ENCODE measurements at regions of chr2 and their contacts with region 1.

Region 1: GRCh38 chr2:84925724-84926376 is 20.4 kb downstream of the TMSB10 start:
- DNase-seq: peak; percentile 94 to 99 (median 97)
- ATAC-seq: peak; percentile 90
- H3K4me3 ChIP-seq: peak overlapping the region; percentile 77
- H3K4me3 Mint-ChIP-seq: peak overlapping the region; percentile 91 to 100 (median 94)
- H3K27ac ChIP-seq: peak overlapping the region; percentile 69
- H3K27ac Mint-ChIP-seq: peak overlapping the region; percentile 91 to 100 (median 96)
- H3K4me1 ChIP-seq: peaks cover 23 to 29% of the 10 kb centered on the region in 2 donors
- H3K4me1 Mint-ChIP-seq: peaks cover 25 to 55% (median 47%) of the 10 kb centered on the region in 7 donors
- H3K27me3 ChIP-seq: no peaks in the 10 kb centered on the region
- H3K27me3 Mint-ChIP-seq: no peaks in the 10 kb centered on the region

Region 2: GRCh38 chr2:84459018-84459943 is 466.6 kb before region 1 on chr2 and contains the start of gene SUCLG1:
- CTCF ChIA-PET with region 1: no interaction called
- POLR2A ChIA-PET with region 1: interaction called, 3 read pairs
- intact Hi-C with region 1: loop called (anchors 1 kb)
- DNase-seq: peak; percentile 72 to 88 (median 84)
- ATAC-seq: peak; percentile 98
- H3K4me3 ChIP-seq: peak within 1 kb of the TSS; percentile 69
- H3K4me3 Mint-ChIP-seq: peak within 1 kb of the TSS; percentile 90 to 100 (median 96)
- H3K27ac ChIP-seq: peak within 1 kb of the TSS; percentile 94
- H3K27ac Mint-ChIP-seq: peak within 1 kb of the TSS; percentile 91 to 99 (median 99)
- H3K4me1 ChIP-seq: peaks cover 9 to 24% of the 10 kb centered on the region in 2 donors
- H3K4me1 Mint-ChIP-seq: peaks cover 33 to 56% (median 50%) of the 10 kb centered on the region in 7 donors
- H3K27me3 ChIP-seq: no peaks in the 10 kb centered on the region
- H3K27me3 Mint-ChIP-seq: no peaks in the 10 kb centered on the region
- total RNA-seq, gene SUCLG1: 45.1 to 63.6 (median 47.9) TPM

Region 3: GRCh38 chr2:84649487-84650142 is 276.2 kb before region 1 on chr2:
- CTCF ChIA-PET with region 1: interaction called, 6 read pairs
- POLR2A ChIA-PET with region 1: no interaction called
- intact Hi-C with region 1: loop called in 1 of 2 experiments (anchors 5 kb)
- DNase-seq: peak in 7 of 9 donors; percentile 16 to 63 (median 49)
- ATAC-seq: no peak
- H3K4me3 ChIP-seq: no peak overlapping the region
- H3K4me3 Mint-ChIP-seq: peak overlapping the region; percentile 27 to 78 (median 58)
- H3K27ac ChIP-seq: no peak overlapping the region
- H3K27ac Mint-ChIP-seq: peak overlapping the region; percentile 2 to 92 (median 78)
- H3K4me1 ChIP-seq: peaks cover 21 to 83% of the 10 kb centered on the region in 2 donors
- H3K4me1 Mint-ChIP-seq: peaks cover 52 to 93% (median 89%) of the 10 kb centered on the region in 7 donors
- H3K27me3 ChIP-seq: no peaks in the 10 kb centered on the region
- H3K27me3 Mint-ChIP-seq: peaks cover 0 to 2% (median 0%) of the 10 kb centered on the region in 5 donors

Region 4: GRCh38 chr2:84840306-84840705 is 85.5 kb before region 1 on chr2:
- CTCF ChIA-PET with region 1: interaction called, 13 read pairs
- POLR2A ChIA-PET with region 1: interaction called, 14 read pairs
- intact Hi-C with region 1: no loop called
- DNase-seq: no peak
- ATAC-seq: peak; percentile 28
- H3K4me3 ChIP-seq: peak overlapping the region; percentile 43
- H3K4me3 Mint-ChIP-seq: peak overlapping the region; percentile 75 to 90 (median 82)
- H3K27ac ChIP-seq: peak overlapping the region; percentile 80
- H3K27ac Mint-ChIP-seq: peak overlapping the region in 8 of 9 donors; percentile 78 to 99 (median 96)
- H3K4me1 ChIP-seq: peaks cover 71 to 95% of the 10 kb centered on the region in 2 donors
- H3K4me1 Mint-ChIP-seq: peaks cover 49 to 97% (median 88%) of the 10 kb centered on the region in 7 donors
- H3K27me3 ChIP-seq: no peaks in the 10 kb centered on the region
- H3K27me3 Mint-ChIP-seq: no peaks in the 10 kb centered on the region

Region 5: GRCh38 chr2:84881581-84882414 is 44.1 kb before region 1 on chr2:
- CTCF ChIA-PET with region 1: interaction called, 82 read pairs
- POLR2A ChIA-PET with region 1: interaction called, 193 read pairs
- intact Hi-C with region 1: loop called (anchors 1 kb)
- DNase-seq: peak; percentile 69 to 89 (median 85)
- ATAC-seq: peak; percentile 80
- H3K4me3 ChIP-seq: peak overlapping the region; percentile 80
- H3K4me3 Mint-ChIP-seq: peak overlapping the region; percentile 84 to 99 (median 97)
- H3K27ac ChIP-seq: peak overlapping the region; percentile 89
- H3K27ac Mint-ChIP-seq: peak overlapping the region; percentile 92 to 99 (median 98)
- H3K4me1 ChIP-seq: peaks cover 5 to 20% of the 10 kb centered on the region in 2 donors
- H3K4me1 Mint-ChIP-seq: peaks cover 35 to 65% (median 61%) of the 10 kb centered on the region in 7 donors
- H3K27me3 ChIP-seq: no peaks in the 10 kb centered on the region
- H3K27me3 Mint-ChIP-seq: peaks cover 0 to 3% (median 0%) of the 10 kb centered on the region in 5 donors

Region 6: DNA sequence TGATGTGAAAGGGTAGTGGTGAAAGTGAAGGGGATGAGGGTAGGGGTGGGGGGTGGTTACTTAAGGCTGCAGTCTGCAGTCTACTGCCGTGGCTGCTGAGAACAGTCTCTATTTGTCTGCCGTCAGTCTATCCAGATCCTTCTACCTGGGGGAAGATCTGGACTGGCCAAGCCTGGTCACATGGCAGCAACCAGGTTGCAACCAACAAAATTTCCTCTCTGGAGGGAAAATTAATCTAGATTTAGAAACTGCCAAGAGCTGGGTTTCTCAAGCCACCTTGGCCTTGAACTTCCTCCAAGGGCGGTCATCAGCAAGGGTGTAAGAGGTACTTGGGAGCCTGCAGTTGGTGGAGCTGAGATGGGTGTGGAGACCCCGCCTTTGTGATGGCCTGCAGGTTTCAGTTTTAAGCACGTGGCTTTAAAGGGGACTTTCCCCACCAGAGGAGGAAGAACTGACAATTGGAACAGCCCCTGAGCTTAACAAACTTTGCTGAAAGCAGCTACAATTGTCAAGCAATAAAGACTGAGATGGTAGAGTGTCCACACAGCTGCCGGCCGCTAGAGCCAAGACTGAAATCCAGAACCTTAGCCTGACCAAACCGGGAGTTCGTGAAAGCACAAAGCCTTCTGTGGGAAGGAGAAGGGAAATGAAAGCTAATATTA is 13.7 kb after region 1 on chr2:
- CTCF ChIA-PET with region 1: interaction called, 49 read pairs
- POLR2A ChIA-PET with region 1: interaction called, 27 read pairs
- intact Hi-C with region 1: loop called (anchors 1 kb)
- DNase-seq: peak; percentile 31 to 76 (median 65)
- ATAC-seq: peak; percentile 92
- H3K4me3 ChIP-seq: peak overlapping the region; percentile 29
- H3K4me3 Mint-ChIP-seq: peak overlapping the region; percentile 66 to 90 (median 82)
- H3K27ac ChIP-seq: peak overlapping the region; percentile 72
- H3K27ac Mint-ChIP-seq: peak overlapping the region; percentile 88 to 100 (median 98)
- H3K4me1 ChIP-seq: peaks cover 20 to 21% of the 10 kb centered on the region in 2 donors
- H3K4me1 Mint-ChIP-seq: peaks cover 17 to 68% (median 34%) of the 10 kb centered on the region in 7 donors
- H3K27me3 ChIP-seq: no peaks in the 10 kb centered on the region
- H3K27me3 Mint-ChIP-seq: no peaks in the 10 kb centered on the region

Region 7: GRCh38 chr2:85288244-85288725 is 362.4 kb after region 1 on chr2:
- CTCF ChIA-PET with region 1: interaction called, 5 read pairs
- POLR2A ChIA-PET with region 1: no interaction called
- intact Hi-C with region 1: loop called (anchors 1 to 2 kb)
- DNase-seq: no peak
- ATAC-seq: no peak
- H3K4me3 ChIP-seq: no peak overlapping the region
- H3K4me3 Mint-ChIP-seq: no peak overlapping the region
- H3K27ac ChIP-seq: no peak overlapping the region
- H3K27ac Mint-ChIP-seq: no peak overlapping the region
- H3K4me1 ChIP-seq: peaks cover 5 to 9% of the 10 kb centered on the region in 2 donors
- H3K4me1 Mint-ChIP-seq: peaks cover 14 to 31% (median 25%) of the 10 kb centered on the region in 7 donors
- H3K27me3 ChIP-seq: no peaks in the 10 kb centered on the region
- H3K27me3 Mint-ChIP-seq: no peaks in the 10 kb centered on the region

Measured in naive thymus-derived CD4-positive, alpha-beta T cell (primary cell).